ENCODE measurements at regions of chr16 and their contacts with region 1.

Region 1: DNA sequence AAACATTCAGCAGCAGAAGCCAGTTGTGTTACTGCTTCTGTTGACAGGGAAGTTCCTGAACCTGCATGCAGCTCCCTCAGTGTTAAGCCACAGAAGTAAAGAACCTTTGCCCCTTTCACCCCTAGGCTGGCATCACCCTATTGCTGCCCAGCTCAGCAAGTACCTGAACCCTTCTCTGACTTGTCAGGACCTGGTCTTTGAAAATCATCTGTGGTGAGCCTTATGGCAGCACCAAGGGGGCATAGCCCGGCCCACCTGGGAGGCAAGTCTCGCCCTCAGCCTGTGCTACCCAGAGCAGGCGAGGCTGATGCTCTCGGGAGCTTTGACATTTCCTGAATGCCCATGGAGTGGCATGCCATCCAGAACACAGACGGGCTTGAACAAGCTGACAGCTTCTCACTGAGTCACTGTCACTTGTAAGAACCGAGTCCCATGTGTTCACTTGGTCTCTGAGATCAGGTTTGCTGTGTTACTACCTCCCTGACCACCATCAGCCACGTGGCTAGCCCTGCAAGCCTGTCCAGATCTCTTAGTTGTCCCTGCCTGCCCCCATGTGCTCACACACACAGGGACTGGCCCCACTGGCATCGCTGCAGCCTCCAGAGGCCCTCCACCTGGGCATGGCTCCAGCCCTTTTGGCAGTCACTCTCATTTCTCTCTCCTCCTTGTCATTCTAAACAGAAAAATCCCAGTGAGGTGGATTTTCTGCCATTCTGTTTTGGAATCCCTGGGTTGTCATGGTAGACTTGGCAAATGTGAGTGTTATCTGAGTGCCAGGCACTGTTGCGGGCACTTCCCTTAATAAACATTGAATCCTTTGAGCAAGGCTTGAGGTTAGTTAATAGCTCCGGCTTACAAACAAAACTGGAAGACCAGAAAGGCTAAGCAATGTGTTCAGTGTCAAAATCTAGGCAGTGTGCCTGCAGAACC is 2.9 kb upstream of the CARMIL2 start:
- DNase-seq: no peak
- ATAC-seq: no peak
- H3K4me3 Mint-ChIP-seq: no peak overlapping the region
- H3K27ac Mint-ChIP-seq: no peak overlapping the region
- H3K4me1 Mint-ChIP-seq: peaks cover 12% of the 10 kb centered on the region
- H3K27me3 Mint-ChIP-seq: no peaks in the 10 kb centered on the region

Region 2: DNA sequence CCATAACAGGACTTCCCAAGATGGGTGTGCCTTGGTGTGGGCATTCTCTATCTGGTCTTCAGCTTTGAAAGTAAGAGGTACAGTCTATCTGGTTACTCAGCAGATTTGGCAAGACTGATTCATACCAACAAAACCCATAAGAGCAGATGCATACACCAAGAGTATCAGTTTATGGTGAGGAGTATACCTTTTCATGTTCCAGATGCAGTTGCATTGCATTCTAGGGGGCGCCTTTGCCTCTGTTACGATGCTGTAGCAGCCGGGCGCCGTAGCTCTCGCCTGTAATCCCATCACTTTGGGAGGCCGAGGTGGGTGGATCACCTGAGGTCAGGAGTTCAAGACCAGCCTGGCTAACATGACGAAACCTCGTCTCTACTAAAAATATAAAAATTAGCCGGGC is 28.2 kb before region 1 on chr16:
- CTCF ChIA-PET with region 1: interaction called, 3 read pairs
- POLR2A ChIA-PET with region 1: no interaction called
- intact Hi-C with region 1: loop called in 1 of 2 experiments (anchors 2 kb)
- DNase-seq: peak; percentile 46
- ATAC-seq: peak; percentile 60
- H3K4me3 Mint-ChIP-seq: no peak overlapping the region
- H3K27ac Mint-ChIP-seq: no peak overlapping the region
- H3K4me1 Mint-ChIP-seq: no peaks in the 10 kb centered on the region
- H3K27me3 Mint-ChIP-seq: no peaks in the 10 kb centered on the region

Region 3: DNA sequence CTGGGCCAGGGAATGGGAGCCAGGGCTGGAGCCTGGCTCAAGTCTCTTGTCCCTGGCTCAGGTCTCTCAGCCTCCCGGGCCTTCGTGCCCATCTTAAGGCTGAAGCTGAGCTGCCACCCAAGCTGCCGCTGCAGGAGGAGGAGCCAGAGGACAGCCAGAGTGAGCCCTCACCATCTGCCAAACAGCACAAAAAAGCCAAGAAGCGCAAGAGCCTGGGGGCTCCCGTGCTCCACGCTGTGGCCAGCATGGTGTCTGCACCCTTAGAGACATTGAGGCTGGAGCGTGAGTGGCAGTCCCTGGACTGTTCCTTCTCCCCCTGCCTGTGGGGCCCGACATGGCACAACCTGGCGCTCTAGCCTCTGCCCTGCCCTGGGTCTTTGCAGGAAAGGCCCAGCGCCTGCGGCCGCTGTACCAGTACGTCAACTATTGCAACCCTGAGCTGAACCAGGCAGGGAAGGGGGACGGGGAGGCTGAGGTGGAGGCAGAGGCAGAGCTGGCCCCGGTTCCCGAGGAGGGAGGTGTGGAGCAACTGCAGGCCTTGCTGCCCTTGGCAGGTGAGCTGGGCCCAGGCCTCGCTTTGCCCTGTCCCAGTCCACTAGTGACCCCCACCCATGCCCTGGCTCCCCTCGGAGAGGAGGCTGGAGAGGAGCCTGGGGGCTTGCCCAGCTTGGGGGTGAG is 25.9 kb after region 1 on chr16:
- CTCF ChIA-PET with region 1: interaction called, 77 read pairs
- POLR2A ChIA-PET with region 1: no interaction called
- intact Hi-C with region 1: no loop called
- DNase-seq: peak; percentile 92
- ATAC-seq: peak; percentile 91
- H3K4me3 Mint-ChIP-seq: no peak overlapping the region
- H3K27ac Mint-ChIP-seq: no peak overlapping the region
- H3K4me1 Mint-ChIP-seq: peaks cover 19% of the 10 kb centered on the region
- H3K27me3 Mint-ChIP-seq: no peaks in the 10 kb centered on the region

Measured in activated CD4-positive, alpha-beta T cell treated with anti-CD3 and anti-CD28 coated beads for 36 hours (primary cell).